PC-9 (cell line): ENCODE measurements at regions of chr6 and their contacts with region 1.

Region 1: GRCh38 chr6:13248053-13248452 is 80.3 kb downstream of the TBC1D7 start:
- DNase-seq: no peak
- H3K4me3 ChIP-seq: no peak overlapping the region
- H3K27ac ChIP-seq: no peak overlapping the region
- H3K4me1 ChIP-seq: no peaks in the 10 kb centered on the region
- H3K27me3 ChIP-seq: peaks cover 57% of the 10 kb centered on the region
- CTCF ChIP-seq: no peak

Region 2: GRCh38 chr6:13261464-13261994 is 13.5 kb after region 1 on chr6:
- CTCF ChIA-PET with region 1: no interaction called
- POLR2A ChIA-PET with region 1: interaction called, 12 read pairs
- intact Hi-C with region 1: no loop called
- DNase-seq: no peak
- H3K4me3 ChIP-seq: no peak overlapping the region
- H3K27ac ChIP-seq: no peak overlapping the region
- H3K4me1 ChIP-seq: no peaks in the 10 kb centered on the region
- H3K27me3 ChIP-seq: 0 out of 2 replicates have a peak, but pooled peaks cover 3% of the 10 kb centered on the region
- CTCF ChIP-seq: no peak